A673 (cell line): ENCODE measurements at regions of chr22 and their contacts with region 1.

Region 1: DNA sequence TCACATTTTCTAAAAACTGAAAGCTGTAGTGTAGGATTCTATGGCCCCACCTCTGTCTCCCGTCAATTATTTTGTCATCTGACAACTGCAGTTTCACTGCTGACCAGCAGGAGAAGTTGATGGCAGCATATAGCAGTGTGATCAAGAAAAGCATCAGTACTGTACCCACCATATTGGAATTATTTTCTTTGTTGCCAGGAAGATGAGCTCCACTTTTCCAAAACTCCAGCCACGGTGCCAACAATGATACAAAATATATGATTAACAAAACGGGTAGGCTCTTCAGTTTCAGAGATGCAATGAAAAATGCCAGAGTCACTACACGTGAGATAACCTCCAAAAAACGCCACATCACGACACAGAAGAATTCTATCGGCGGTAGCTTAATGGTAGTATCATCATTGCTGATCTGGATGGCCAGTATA is 41.3 kb downstream of the XKR3 start:
- DNase-seq: peak; percentile 7
- H3K4me3 ChIP-seq: no peak overlapping the region
- H3K27ac ChIP-seq: no peak overlapping the region
- H3K4me1 ChIP-seq: no peaks in the 10 kb centered on the region
- H3K27me3 ChIP-seq: no peaks in the 10 kb centered on the region
- CTCF ChIP-seq: peak; percentile 45

Region 2: DNA sequence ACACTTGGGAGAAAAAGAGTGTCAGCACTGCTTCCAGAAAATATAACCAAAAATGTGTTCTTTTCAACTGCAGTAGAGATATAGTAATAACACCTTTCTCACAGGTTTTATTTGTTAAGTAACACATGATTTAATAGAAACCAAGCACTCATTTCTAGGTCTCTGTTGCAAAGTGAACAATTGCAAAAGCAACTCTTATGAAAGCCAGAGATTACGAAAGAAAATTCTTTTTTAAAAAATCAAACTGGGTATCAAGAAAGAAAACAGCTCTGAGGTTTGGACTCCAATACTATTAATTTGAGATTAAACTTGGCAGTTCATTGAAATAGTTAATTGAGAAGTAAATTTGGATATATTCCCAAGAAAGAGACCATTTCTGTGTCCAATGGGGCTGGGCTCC is 51.0 kb after region 1 on chr22:
- CTCF ChIA-PET with region 1: no interaction called
- POLR2A ChIA-PET with region 1: no interaction called
- intact Hi-C with region 1: loop called (anchors 10 kb)
- DNase-seq: no peak
- H3K4me3 ChIP-seq: no peak overlapping the region
- H3K27ac ChIP-seq: no peak overlapping the region
- H3K4me1 ChIP-seq: no peaks in the 10 kb centered on the region
- H3K27me3 ChIP-seq: no peaks in the 10 kb centered on the region
- CTCF ChIP-seq: no peak